Right lobe of liver (tissue), 6 donors: ENCODE measurements at regions of chr9 and their contacts with region 1.

Region 1: GRCh38 chr9:96241391-96241809 is 60.6 kb downstream of the HSD17B3 start:
- DNase-seq: no peak
- ATAC-seq: no peak
- H3K4me3 ChIP-seq: no peak overlapping the region
- H3K27ac ChIP-seq: no peak overlapping the region
- H3K4me1 ChIP-seq: no peaks in the 10 kb centered on the region
- H3K27me3 ChIP-seq: no peaks in the 10 kb centered on the region
- CTCF ChIP-seq: no peak
- POLR2A ChIP-seq: no peak

Region 2: GRCh38 chr9:96317335-96317980 is 76.1 kb after region 1 on chr9:
- intact Hi-C with region 1: loop called (anchors 10 kb)
- DNase-seq: no peak
- ATAC-seq: peak; percentile 77 to 83 (median 79)
- H3K4me3 ChIP-seq: no peak overlapping the region
- H3K27ac ChIP-seq: no peak overlapping the region
- H3K4me1 ChIP-seq: no peaks in the 10 kb centered on the region
- H3K27me3 ChIP-seq: no peaks in the 10 kb centered on the region
- CTCF ChIP-seq: peak; percentile 62 to 87 (median 81)
- POLR2A ChIP-seq: no peak